ENCODE measurements at regions of chr7 and their contacts with region 1.

Region 1: DNA sequence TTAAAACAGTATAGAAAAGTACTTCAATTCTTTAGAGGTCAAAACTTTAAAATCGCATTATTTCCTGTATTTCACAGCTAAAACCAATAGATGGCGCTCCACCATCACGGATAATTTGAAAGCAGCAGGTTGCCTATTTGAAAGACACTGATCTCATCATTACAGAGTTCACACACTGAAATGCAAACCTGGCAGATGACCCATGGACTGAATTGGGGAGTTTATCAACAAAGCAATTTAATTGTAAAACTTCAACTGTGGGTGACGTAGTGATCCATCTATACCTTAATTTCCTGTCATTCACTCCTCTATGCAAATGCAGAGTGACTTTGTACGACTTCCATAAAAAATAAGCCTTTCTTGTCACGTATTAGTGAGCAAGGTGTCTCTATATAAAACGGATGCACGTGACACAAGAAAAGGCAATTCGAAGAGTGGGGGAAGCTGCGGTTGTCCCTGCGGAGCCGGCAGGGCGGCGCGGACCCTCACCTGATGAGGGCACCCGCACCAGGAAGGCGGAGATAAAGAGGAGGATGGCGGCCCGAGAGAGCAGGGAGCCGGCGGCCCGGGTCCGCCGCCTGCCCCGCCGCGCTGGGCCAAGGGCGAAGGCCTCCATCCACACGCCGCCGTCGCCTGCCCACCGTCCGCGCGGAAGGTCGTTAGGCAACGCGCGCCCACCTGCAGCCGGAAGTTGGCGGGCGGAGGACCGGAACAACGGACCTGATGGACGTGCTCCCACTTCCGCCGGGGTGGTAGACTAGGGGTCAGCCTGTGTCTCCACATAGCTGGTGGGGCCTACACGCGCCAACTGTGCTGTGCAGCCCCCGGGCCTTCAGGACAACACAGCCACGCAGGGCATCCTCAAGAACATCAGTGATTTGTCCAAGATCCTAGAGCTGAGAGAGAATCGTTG is at the start of gene ZPBP:
- DNase-seq: peak; percentile 40
- ATAC-seq: peak; percentile 79
- H3K4me3 Mint-ChIP-seq: peak within 1 kb of the TSS; percentile 88
- H3K27ac Mint-ChIP-seq: peak within 1 kb of the TSS; percentile 81
- H3K4me1 Mint-ChIP-seq: peaks cover 8% of the 10 kb centered on the region
- H3K27me3 Mint-ChIP-seq: peaks cover 2% of the 10 kb centered on the region
- CTCF ChIP-seq: peak; percentile 61
- total RNA-seq, gene ZPBP: not detected in 2 replicates

Region 2: DNA sequence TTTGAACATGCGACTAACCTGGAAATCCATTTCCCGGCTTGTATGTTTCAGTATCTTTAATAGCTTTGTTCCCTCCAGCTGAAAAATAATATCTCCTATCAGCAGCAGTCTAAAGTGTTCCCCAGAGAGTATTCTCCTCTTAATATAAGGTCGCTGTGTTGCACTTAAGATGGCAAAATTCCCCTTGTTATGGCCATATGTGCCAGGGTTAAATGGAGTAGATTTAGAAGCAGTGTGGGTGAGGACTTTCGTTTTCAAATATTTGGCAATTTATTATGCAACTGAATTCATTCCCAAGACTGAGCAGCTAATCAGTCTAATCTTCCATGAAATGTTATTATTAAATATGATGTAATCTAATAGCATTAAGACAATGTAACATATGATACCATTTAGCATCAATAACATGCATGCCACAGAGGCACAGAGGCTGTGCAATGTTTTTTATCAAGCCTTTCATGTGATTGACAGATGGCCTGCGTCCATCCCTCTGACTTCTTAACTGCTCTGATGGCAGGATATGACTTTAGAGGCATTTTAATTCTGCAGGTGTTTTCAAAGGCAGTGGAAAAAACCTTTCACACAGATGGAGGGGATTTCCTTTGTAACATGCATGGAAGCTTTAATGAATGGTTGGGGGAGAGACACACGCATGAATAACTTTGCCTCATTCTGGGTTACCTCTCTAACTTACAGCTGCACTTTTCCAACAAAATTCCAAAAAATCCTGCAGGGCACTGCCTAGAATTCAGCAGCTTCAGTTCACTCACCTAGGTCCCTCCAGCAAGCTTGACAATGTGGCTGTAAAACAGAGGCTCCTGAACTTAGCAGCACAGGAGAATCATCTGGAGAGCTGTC is 55.3 kb after region 1 on chr7:
- CTCF ChIA-PET with region 1: interaction called, 3 read pairs
- POLR2A ChIA-PET with region 1: interaction called, 3 read pairs
- intact Hi-C with region 1: loop called (anchors 2 kb)
- DNase-seq: no peak
- ATAC-seq: peak; percentile 77
- H3K4me3 Mint-ChIP-seq: peak overlapping the region; percentile 46
- H3K27ac Mint-ChIP-seq: peak overlapping the region; percentile 95
- H3K4me1 Mint-ChIP-seq: peaks cover 93% of the 10 kb centered on the region
- H3K27me3 Mint-ChIP-seq: no peaks in the 10 kb centered on the region
- CTCF ChIP-seq: no peak

Region 3: GRCh38 chr7:50632561-50633413 is 540.0 kb after region 1 on chr7:
- CTCF ChIA-PET with region 1: interaction called, 13 read pairs
- POLR2A ChIA-PET with region 1: no interaction called
- intact Hi-C with region 1: loop called (anchors 1 kb)
- DNase-seq: peak; percentile 32
- ATAC-seq: peak; percentile 79
- H3K4me3 Mint-ChIP-seq: no peak overlapping the region
- H3K27ac Mint-ChIP-seq: no peak overlapping the region
- H3K4me1 Mint-ChIP-seq: peaks cover 14% of the 10 kb centered on the region
- H3K27me3 Mint-ChIP-seq: peaks cover 20% of the 10 kb centered on the region
- CTCF ChIP-seq: no peak

Region 4: GRCh38 chr7:51067757-51068156 is 974.9 kb after region 1 on chr7:
- CTCF ChIA-PET with region 1: interaction called, 15 read pairs
- POLR2A ChIA-PET with region 1: no interaction called
- intact Hi-C with region 1: loop called (anchors 1 kb)
- DNase-seq: no peak
- ATAC-seq: no peak
- H3K4me3 Mint-ChIP-seq: no peak overlapping the region
- H3K27ac Mint-ChIP-seq: no peak overlapping the region
- H3K4me1 Mint-ChIP-seq: no peaks in the 10 kb centered on the region
- H3K27me3 Mint-ChIP-seq: no peaks in the 10 kb centered on the region
- CTCF ChIP-seq: no peak

Region 5: GRCh38 chr7:51366930-51367613 is 1274.2 kb after region 1 on chr7:
- CTCF ChIA-PET with region 1: interaction called, 4 read pairs
- POLR2A ChIA-PET with region 1: no interaction called
- intact Hi-C with region 1: loop called (anchors 2 kb)
- DNase-seq: no peak
- ATAC-seq: no peak
- H3K4me3 Mint-ChIP-seq: no peak overlapping the region
- H3K27ac Mint-ChIP-seq: no peak overlapping the region
- H3K4me1 Mint-ChIP-seq: no peaks in the 10 kb centered on the region
- H3K27me3 Mint-ChIP-seq: no peaks in the 10 kb centered on the region
- CTCF ChIP-seq: no peak